ENCODE measurements at regions of chr19 and their contacts with region 1.

Region 1: GRCh38 chr19:54231077-54231931 is 8.5 kb upstream of the LILRB3 start:
- DNase-seq: peak; percentile 80
- ATAC-seq: peak; percentile 99
- H3K4me3 ChIP-seq: no peak overlapping the region; a peak in 1 of 6 replicates
- H3K27ac ChIP-seq: no peak overlapping the region
- H3K4me1 ChIP-seq: peaks cover 11% of the 10 kb centered on the region
- H3K27me3 ChIP-seq: peaks cover 1 to 13% of the 10 kb centered on the region in 2 experiments; a peak in 3 of 5 replicates
- CTCF ChIP-seq: peak; percentile 99
- EP300 ChIP-seq: no peak
- POLR2A ChIP-seq: no peak
- RAD21 ChIP-seq: peak; percentile 98

Region 2: GRCh38 chr19:54159352-54160181 is 71.7 kb before region 1 on chr19 and contains the start of gene LENG1:
- CTCF ChIA-PET with region 1: no interaction called
- POLR2A ChIA-PET with region 1: no interaction called
- in situ Hi-C with region 1: no loop called
- intact Hi-C with region 1: loop called (anchors 2 kb)
- DNase-seq: peak; percentile 100
- ATAC-seq: peak; percentile 94
- H3K4me3 ChIP-seq: peak within 1 kb of the TSS; percentile 75 to 93 (median 80)
- H3K27ac ChIP-seq: peak within 1 kb of the TSS; percentile 90
- H3K4me1 ChIP-seq: peaks cover 13% of the 10 kb centered on the region
- H3K27me3 ChIP-seq: no peaks in the 10 kb centered on the region; a peak in 1 of 5 replicates
- CTCF ChIP-seq: peak; percentile 68
- EP300 ChIP-seq: no peak; a peak in 1 of 4 replicates
- POLR2A ChIP-seq: peak; percentile 47 to 62; a peak in 2 of 4 replicates
- RAD21 ChIP-seq: 0 out of 2 replicates have a peak, but pooled peaks have one; percentile 35
- total RNA-seq, gene LENG1: 3.8 and 4.0 TPM in 2 replicates

Region 3: GRCh38 chr19:54168174-54168917 is 63.0 kb before region 1 on chr19:
- CTCF ChIA-PET with region 1: interaction called, 18 read pairs
- POLR2A ChIA-PET with region 1: no interaction called
- in situ Hi-C with region 1: no loop called
- intact Hi-C with region 1: loop called (anchors 2 kb)
- DNase-seq: peak; percentile 71
- ATAC-seq: peak; percentile 87
- H3K4me3 ChIP-seq: peak overlapping the region in 1 of 3 experiments; percentile 30; a peak in 1 of 6 replicates
- H3K27ac ChIP-seq: no peak overlapping the region
- H3K4me1 ChIP-seq: peaks cover 12% of the 10 kb centered on the region; the same call in 1 of the 2 replicates
- H3K27me3 ChIP-seq: no peaks in the 10 kb centered on the region
- CTCF ChIP-seq: peak; percentile 88
- EP300 ChIP-seq: no peak
- POLR2A ChIP-seq: no peak
- RAD21 ChIP-seq: peak; percentile 42; the same call in 1 of the 2 replicates

Region 4: GRCh38 chr19:54209811-54210494 is 21.4 kb before region 1 on chr19:
- CTCF ChIA-PET with region 1: interaction called, 3 read pairs
- POLR2A ChIA-PET with region 1: no interaction called
- in situ Hi-C with region 1: no loop called
- intact Hi-C with region 1: loop called (anchors 2 kb)
- DNase-seq: peak; percentile 98
- ATAC-seq: peak; percentile 73
- H3K4me3 ChIP-seq: peak overlapping the region; percentile 11 to 55 (median 15); a peak in 4 of 6 replicates
- H3K27ac ChIP-seq: peak overlapping the region; percentile 80
- H3K4me1 ChIP-seq: peaks cover 68% of the 10 kb centered on the region
- H3K27me3 ChIP-seq: no peaks in the 10 kb centered on the region
- CTCF ChIP-seq: no peak
- EP300 ChIP-seq: peak; percentile 9 to 80; a peak in 3 of 4 replicates
- POLR2A ChIP-seq: peak; percentile 16 to 52; a peak in 3 of 4 replicates
- RAD21 ChIP-seq: no peak

Measured in HepG2 (cell line).